ENCODE measurements at regions of chr15 and their contacts with region 1.

Region 1: DNA sequence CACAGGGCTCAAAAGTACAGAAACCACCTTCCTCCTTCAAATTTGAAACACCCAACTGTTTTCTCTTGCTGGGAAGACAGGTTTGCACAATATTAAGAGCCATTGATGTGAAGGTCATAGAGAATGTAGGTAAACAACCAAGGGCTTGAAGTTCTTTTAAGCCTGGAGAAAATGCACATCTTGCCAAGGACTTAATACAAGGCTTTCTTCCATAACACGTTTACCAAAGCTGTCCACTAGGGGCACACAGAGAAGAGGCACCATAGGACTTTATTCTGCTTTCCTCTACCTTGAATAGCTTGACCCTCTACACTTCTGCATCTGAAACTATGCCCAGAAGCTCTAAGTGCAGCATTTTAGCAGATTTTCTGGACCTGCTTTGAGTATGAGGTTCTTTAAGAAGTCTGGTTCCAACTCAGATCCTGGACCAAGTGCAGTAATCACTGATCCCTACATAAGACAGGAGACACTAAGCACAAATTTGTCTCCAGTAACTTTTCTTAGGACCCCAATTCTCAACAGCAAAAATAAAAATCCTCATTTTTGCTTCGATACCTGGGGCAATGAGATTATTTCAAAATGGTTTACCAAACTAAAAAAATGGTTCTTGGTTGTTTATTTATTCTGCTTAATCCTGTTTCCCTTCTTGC is 138.0 kb downstream of the FBN1 start:
- DNase-seq: peak; percentile 21 to 59 (median 36)
- H3K4me3 ChIP-seq: no peak overlapping the region
- H3K27ac ChIP-seq: no peak overlapping the region
- H3K4me1 ChIP-seq: no peaks in the 10 kb centered on the region
- H3K27me3 ChIP-seq: no peaks in the 10 kb centered on the region
- CTCF ChIP-seq: peak; percentile 49 to 77 (median 65)
- POLR2A ChIP-seq: no peak

Region 2: DNA sequence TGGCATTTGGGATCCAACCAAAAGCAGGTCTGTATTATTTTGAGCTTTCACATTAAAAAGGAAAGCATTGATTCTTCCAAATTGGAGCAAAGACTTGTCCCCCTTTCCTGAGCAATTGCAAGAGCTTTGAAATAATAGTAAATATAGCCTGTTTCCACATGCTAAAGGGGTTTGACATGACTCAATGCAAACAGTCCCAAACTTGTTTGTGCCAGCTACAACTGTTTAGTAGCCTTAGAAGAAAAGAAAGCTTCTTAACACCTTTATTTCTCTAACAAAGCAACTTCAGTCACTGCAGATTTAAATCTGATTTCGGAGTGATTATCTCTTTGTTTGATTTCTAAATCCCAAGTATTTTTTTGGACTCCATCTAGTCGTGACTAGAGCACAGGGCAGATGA is 610.0 kb before region 1 on chr15:
- intact Hi-C with region 1: no loop called
- DNase-seq: no peak
- H3K4me3 ChIP-seq: no peak overlapping the region
- H3K27ac ChIP-seq: no peak overlapping the region
- H3K4me1 ChIP-seq: no peaks in the 10 kb centered on the region
- H3K27me3 ChIP-seq: no peaks in the 10 kb centered on the region
- CTCF ChIP-seq: no peak
- POLR2A ChIP-seq: no peak

Region 3: GRCh38 chr15:48225786-48226502 is 281.6 kb before region 1 on chr15:
- intact Hi-C with region 1: no loop called
- DNase-seq: no peak
- H3K4me3 ChIP-seq: no peak overlapping the region
- H3K27ac ChIP-seq: no peak overlapping the region
- H3K4me1 ChIP-seq: no peaks in the 10 kb centered on the region
- H3K27me3 ChIP-seq: no peaks in the 10 kb centered on the region
- CTCF ChIP-seq: no peak
- POLR2A ChIP-seq: no peak

Region 4: GRCh38 chr15:48307586-48307985 is 200.0 kb before region 1 on chr15:
- intact Hi-C with region 1: no loop called
- DNase-seq: no peak
- H3K4me3 ChIP-seq: no peak overlapping the region
- H3K27ac ChIP-seq: no peak overlapping the region
- H3K4me1 ChIP-seq: no peaks in the 10 kb centered on the region
- H3K27me3 ChIP-seq: no peaks in the 10 kb centered on the region
- CTCF ChIP-seq: no peak
- POLR2A ChIP-seq: no peak

Region 5: GRCh38 chr15:48565560-48566482 is 58.3 kb after region 1 on chr15:
- intact Hi-C with region 1: no loop called
- DNase-seq: no peak
- H3K4me3 ChIP-seq: no peak overlapping the region
- H3K27ac ChIP-seq: no peak overlapping the region
- H3K4me1 ChIP-seq: peaks cover 6 to 18% of the 10 kb centered on the region in 2 donors
- H3K27me3 ChIP-seq: no peaks in the 10 kb centered on the region
- CTCF ChIP-seq: no peak
- POLR2A ChIP-seq: no peak

Region 6: GRCh38 chr15:48645558-48646330 is 138.2 kb after region 1 on chr15 and contains the start of gene FBN1:
- intact Hi-C with region 1: loop called in 1 of 2 experiments (anchors 10 kb)
- DNase-seq: peak; percentile 81 to 89 (median 85)
- H3K4me3 ChIP-seq: peak within 1 kb of the TSS; percentile 74 to 91 (median 82)
- H3K27ac ChIP-seq: peak within 1 kb of the TSS; percentile 58 to 94 (median 86)
- H3K4me1 ChIP-seq: peaks cover 12 to 29% of the 10 kb centered on the region in 2 donors
- H3K27me3 ChIP-seq: no peaks in the 10 kb centered on the region
- CTCF ChIP-seq: no peak
- POLR2A ChIP-seq: peak; percentile 60 to 94
- total RNA-seq, gene FBN1: 30.2 to 84.6 (median 61.0) TPM

Measured in adrenal gland (tissue), 19 donors.